T-cell (primary cell): ENCODE measurements at regions of chr18 and their contacts with region 1.

Region 1: DNA sequence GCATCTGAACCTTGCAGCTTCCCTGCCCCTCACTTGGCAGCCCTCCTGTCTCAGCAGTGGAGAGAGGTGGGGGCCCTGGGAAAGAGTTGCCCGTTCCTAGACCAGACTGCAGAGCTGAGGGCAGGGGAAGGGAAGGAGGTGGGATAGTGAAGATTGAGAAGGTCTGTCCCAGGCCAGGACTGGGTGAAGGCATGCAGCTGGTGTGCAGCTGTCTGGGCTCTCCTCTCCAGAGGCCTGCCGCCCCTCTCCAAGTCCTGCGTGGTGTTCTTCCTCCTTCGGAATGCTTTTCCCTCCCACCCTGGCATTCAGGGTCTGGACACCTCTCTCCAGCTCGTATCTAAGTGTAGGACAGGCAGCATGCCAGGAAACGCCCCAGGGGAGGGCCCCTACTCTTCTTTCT is 323.5 kb downstream of the CELF4 start:
- DNase-seq: no peak
- ATAC-seq: no peak
- H3K4me3 ChIP-seq: no peak overlapping the region
- H3K4me3 Mint-ChIP-seq: no peak overlapping the region
- H3K27ac ChIP-seq: no peak overlapping the region
- H3K27ac Mint-ChIP-seq: no peak overlapping the region
- H3K4me1 ChIP-seq: no peaks in the 10 kb centered on the region
- H3K4me1 Mint-ChIP-seq: peaks cover 1 to 6% (median 4%) of the 10 kb centered on the region in 3 donors
- H3K27me3 ChIP-seq: peaks cover 0 to 28% of the 10 kb centered on the region in 2 experiments
- H3K27me3 Mint-ChIP-seq: peaks cover 31 to 33% of the 10 kb centered on the region in 2 donors

Region 2: GRCh38 chr18:37055137-37055802 is 186.8 kb before region 1 on chr18:
- CTCF ChIA-PET with region 1: no interaction called
- POLR2A ChIA-PET with region 1: no interaction called
- DNase-seq: no peak
- ATAC-seq: no peak
- H3K4me3 ChIP-seq: no peak overlapping the region
- H3K4me3 Mint-ChIP-seq: no peak overlapping the region
- H3K27ac ChIP-seq: no peak overlapping the region
- H3K27ac Mint-ChIP-seq: no peak overlapping the region
- H3K4me1 ChIP-seq: no peaks in the 10 kb centered on the region
- H3K4me1 Mint-ChIP-seq: no peaks in the 10 kb centered on the region
- H3K27me3 ChIP-seq: no peaks in the 10 kb centered on the region
- H3K27me3 Mint-ChIP-seq: no peaks in the 10 kb centered on the region

Region 3: GRCh38 chr18:37124516-37124915 is 117.6 kb before region 1 on chr18:
- CTCF ChIA-PET with region 1: no interaction called
- POLR2A ChIA-PET with region 1: no interaction called
- DNase-seq: no peak
- ATAC-seq: no peak
- H3K4me3 ChIP-seq: no peak overlapping the region
- H3K4me3 Mint-ChIP-seq: no peak overlapping the region
- H3K27ac ChIP-seq: no peak overlapping the region
- H3K27ac Mint-ChIP-seq: no peak overlapping the region
- H3K4me1 ChIP-seq: no peaks in the 10 kb centered on the region
- H3K4me1 Mint-ChIP-seq: no peaks in the 10 kb centered on the region
- H3K27me3 ChIP-seq: no peaks in the 10 kb centered on the region
- H3K27me3 Mint-ChIP-seq: no peaks in the 10 kb centered on the region

Region 4: DNA sequence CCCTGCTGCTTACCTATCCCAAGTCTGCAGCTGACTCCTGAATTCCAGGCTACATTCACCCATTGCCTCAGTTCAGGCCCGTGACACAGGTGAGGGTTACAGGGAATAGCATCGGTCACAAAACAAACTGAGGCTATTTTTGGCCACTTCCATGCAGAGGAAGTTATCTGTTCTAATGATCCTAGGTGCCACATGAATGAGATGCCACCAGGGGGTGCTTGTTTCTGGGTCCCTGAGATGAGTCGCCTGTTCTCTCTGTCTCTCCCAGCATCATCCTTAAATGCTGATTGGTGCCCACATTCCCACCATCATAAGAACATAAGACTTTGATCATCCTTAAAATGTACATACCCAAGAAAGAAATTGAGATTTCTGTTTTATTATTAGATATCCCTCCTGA is 442.5 kb after region 1 on chr18:
- CTCF ChIA-PET with region 1: no interaction called
- POLR2A ChIA-PET with region 1: interaction called in 1 of 2 experiments, 12 read pairs
- DNase-seq: no peak
- ATAC-seq: no peak
- H3K4me3 ChIP-seq: no peak overlapping the region
- H3K4me3 Mint-ChIP-seq: no peak overlapping the region
- H3K27ac ChIP-seq: no peak overlapping the region
- H3K27ac Mint-ChIP-seq: no peak overlapping the region
- H3K4me1 ChIP-seq: no peaks in the 10 kb centered on the region
- H3K4me1 Mint-ChIP-seq: no peaks in the 10 kb centered on the region
- H3K27me3 ChIP-seq: no peaks in the 10 kb centered on the region
- H3K27me3 Mint-ChIP-seq: no peaks in the 10 kb centered on the region